Left cardiac atrium (tissue), 4 donors: ENCODE measurements at regions of chr14 and their contacts with region 1.

Region 1: GRCh38 chr14:101972268-101972774 is 7.9 kb downstream of the DYNC1H1 start:
- DNase-seq: peak; percentile 89
- ATAC-seq: peak; percentile 98 to 99

Region 2: DNA sequence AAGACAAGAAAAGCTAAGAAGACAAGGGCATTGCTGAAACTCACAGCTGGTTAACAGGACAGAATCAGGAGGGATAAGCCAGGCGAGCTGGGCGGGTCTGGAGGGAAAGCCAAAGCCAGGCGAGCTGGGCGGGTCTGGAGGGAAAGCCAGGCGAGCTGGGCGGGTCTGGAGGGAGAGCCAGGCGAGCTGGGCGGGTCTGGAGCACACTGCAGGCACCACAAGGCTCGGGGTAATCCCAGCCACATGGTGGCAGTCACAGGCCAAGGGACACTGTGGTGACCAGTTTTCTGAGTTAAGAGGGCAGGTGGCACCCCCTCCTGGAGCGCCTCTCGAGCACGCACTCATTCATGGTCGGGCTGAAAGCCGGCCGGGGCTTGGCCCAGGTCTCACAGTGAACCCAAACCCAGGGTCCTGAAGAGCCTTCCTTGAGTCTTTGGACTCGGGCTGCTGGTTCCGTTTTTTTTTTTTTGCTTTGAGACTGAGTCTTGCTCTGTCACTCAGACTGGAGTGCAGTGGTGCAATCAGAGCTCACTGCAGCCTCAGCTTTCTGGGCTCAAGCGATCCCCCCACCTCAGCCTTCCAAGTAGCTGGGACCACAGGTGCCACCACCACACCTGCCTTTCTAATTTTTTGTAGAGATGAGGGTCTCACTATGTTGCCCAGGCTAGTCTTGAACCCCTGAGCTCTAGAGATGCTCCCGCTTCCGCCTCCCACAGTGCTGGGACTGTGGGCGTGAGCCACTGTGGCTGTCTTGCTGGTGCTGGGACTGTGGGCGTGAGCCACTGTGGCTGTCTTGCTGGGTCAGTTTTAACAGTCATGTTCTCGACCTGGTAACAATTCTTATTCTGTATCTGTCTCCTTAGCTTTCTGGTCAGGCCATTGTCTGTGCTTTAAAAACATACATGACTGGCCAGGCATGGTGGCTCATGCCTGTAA is 74.3 kb after region 1 on chr14:
- intact Hi-C with region 1: no loop called
- DNase-seq: peak; percentile 90
- ATAC-seq: peak; percentile 88 to 92

Region 3: GRCh38 chr14:102086972-102087761 is 114.8 kb after region 1 on chr14 and contains the start of gene HSP90AA1:
- intact Hi-C with region 1: loop called in 1 of 2 experiments (anchors 5 kb)
- DNase-seq: peak; percentile 96
- ATAC-seq: peak; percentile 91 to 94
- total RNA-seq, gene HSP90AA1: 395 to 505 TPM

Region 4: DNA sequence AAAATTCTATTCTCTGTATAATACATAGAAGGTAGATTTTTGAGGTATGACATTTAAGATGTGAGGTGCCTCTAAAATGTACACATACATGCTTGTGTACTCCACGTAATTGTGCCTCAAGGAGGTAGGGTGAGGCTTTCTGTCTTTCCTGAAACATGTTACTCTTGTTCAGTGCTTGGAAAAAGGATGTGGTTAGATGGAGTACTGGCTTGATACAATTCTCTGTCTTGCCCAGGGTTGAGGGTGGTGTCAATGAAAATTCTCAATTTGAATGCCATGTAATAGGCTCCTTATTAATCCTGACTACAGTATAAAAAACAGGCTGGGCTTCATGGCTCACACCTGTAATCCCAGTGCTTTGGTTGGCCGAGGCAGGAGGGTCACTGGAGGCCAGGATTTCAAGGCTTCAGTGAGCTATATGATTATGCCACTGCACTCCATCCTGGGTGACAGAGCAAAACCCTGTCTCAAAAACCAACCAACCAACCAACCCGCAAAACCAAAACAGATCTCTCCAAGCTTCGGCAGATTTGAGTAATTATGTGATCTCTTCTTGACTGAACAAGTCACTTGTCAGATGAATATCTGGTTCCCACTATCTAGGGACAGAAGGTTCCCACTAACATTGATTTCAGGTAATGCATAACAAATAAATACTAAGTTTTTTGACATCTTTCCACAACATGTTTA is 661.7 kb after region 1 on chr14:
- intact Hi-C with region 1: no loop called
- DNase-seq: no peak
- ATAC-seq: no peak